CD4-positive, alpha-beta memory T cell (primary cell): ENCODE measurements at regions of chr11 and their contacts with region 1.

Region 1: DNA sequence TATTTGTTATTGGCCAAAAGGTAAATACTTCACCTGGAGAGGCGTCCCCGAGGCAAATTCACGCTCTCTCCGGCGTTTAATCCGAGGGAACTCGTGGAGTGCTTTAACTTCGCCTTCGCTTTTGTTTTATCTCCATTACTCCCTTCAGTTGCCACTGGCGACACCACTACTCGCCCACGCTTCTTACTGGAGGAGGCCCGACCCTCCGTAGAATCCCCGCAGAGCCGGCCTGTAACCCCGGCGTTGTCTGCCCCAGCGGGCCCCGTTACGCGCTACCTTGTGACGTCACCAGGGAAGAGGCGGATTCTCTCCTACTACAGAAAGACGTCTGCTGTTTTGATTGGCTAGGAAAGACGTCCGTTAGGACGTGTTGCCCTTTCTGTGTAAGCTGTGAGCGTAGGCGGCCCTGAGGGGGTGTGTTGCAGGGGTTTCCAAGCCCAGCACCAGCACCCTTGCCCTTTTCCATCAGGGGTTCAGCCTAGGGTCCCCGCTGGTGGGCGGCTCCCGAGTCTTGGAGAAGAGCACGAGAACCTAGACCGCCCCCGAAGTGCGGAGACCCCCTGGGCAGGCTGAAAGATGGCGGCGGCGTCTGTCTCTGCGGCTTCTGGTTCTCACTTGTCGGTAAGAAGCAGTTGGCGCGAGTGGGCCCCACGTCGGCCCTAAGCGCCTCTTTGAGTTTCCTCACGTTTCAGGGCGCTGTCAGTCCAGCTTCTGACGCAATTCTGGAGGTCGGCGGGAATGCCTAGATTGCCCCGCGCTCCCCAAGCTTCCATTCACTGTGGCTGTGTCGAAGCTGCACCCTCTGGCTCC is at the start of gene CEP57:
- DNase-seq: peak; percentile 95 to 99 (median 96)
- H3K4me3 ChIP-seq: peak within 1 kb of the TSS; percentile 68 to 98
- H3K4me3 Mint-ChIP-seq: peak within 1 kb of the TSS; percentile 97 to 100 (median 99)
- H3K27ac ChIP-seq: peak within 1 kb of the TSS; percentile 99
- H3K27ac Mint-ChIP-seq: peak within 1 kb of the TSS; percentile 100
- H3K4me1 ChIP-seq: peaks cover 47% of the 10 kb centered on the region
- H3K4me1 Mint-ChIP-seq: peaks cover 43 to 70% (median 56%) of the 10 kb centered on the region in 4 donors
- H3K27me3 ChIP-seq: no peaks in the 10 kb centered on the region
- H3K27me3 Mint-ChIP-seq: no peaks in the 10 kb centered on the region
- total RNA-seq, gene CEP57: 76.0 to 78.9 TPM

Region 2: DNA sequence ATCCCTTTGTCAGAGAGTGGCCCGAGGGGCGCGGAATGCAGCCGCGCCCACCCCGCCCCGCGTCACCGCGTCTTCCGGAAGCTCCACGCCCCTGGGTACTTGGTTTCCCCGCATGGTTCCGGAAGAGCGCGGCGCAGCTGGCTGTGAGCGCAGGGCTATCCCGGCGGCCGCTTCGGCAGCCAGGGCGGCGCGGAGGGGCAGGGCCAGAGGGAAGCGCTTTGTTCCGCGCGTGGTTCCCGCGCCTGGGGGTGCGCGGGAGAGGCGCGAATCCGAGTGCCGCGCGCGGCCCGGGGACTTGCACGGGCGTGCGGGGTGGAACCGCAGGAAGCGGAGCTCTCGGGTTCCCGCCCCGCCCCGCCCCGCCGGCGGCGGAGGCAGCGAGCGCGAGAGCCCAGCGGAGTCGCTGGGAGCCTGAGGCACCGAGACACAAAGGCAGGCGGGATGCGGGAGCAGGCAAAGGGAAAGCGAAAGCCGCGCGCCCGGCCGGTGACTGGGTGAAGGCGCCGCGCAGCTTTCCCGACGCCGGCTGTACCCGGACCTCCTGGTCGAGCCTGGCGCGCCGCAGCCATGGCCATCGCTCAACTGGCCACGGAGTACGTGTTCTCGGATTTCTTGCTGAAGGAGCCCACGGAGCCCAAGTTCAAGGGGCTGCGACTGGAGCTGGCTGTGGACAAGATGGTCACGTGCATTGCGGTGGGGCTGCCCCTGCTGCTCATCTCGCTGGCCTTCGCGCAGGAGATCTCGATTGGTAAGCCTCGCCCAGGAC is 1661.4 kb before region 1 on chr11 and contains the start of gene PANX1:
- CTCF ChIA-PET with region 1: no interaction called
- POLR2A ChIA-PET with region 1: interaction called, 3 read pairs
- intact Hi-C with region 1: loop called (anchors 5 kb)
- DNase-seq: peak; percentile 72 to 81 (median 78)
- H3K4me3 ChIP-seq: peak within 1 kb of the TSS; percentile 89 to 96
- H3K4me3 Mint-ChIP-seq: peak within 1 kb of the TSS in 4 of 8 donors; percentile 90 to 94 (median 92)
- H3K27ac ChIP-seq: peak within 1 kb of the TSS; percentile 84
- H3K27ac Mint-ChIP-seq: peak within 1 kb of the TSS; percentile 87 to 98 (median 94)
- H3K4me1 ChIP-seq: peaks cover 52% of the 10 kb centered on the region
- H3K4me1 Mint-ChIP-seq: peaks cover 21 to 31% (median 26%) of the 10 kb centered on the region in 4 donors
- H3K27me3 ChIP-seq: no peaks in the 10 kb centered on the region
- H3K27me3 Mint-ChIP-seq: no peaks in the 10 kb centered on the region
- total RNA-seq, gene PANX1: 7.6 to 8.3 TPM

Region 3: GRCh38 chr11:94973099-94973968 is 817.0 kb before region 1 on chr11 and contains the starts of genes CWC15 and KDM4D:
- CTCF ChIA-PET with region 1: no interaction called
- POLR2A ChIA-PET with region 1: interaction called, 15 read pairs
- intact Hi-C with region 1: loop called (anchors 1 kb)
- DNase-seq: peak; percentile 91 to 96 (median 93)
- H3K4me3 ChIP-seq: peak within 1 kb of the TSS; percentile 61 to 95
- H3K4me3 Mint-ChIP-seq: peak within 1 kb of the TSS; percentile 94 to 100 (median 98)
- H3K27ac ChIP-seq: peak within 1 kb of the TSS; percentile 92
- H3K27ac Mint-ChIP-seq: peak within 1 kb of the TSS; percentile 84 to 100 (median 98)
- H3K4me1 ChIP-seq: peaks cover 16% of the 10 kb centered on the region
- H3K4me1 Mint-ChIP-seq: peaks cover 14 to 35% (median 25%) of the 10 kb centered on the region in 4 donors
- H3K27me3 ChIP-seq: no peaks in the 10 kb centered on the region
- H3K27me3 Mint-ChIP-seq: no peaks in the 10 kb centered on the region
- total RNA-seq, gene CWC15: 62.7 to 69.4 TPM
- total RNA-seq, gene KDM4D: 0.32 to 0.39 TPM

Region 4: GRCh38 chr11:95778699-95779098 is 11.6 kb before region 1 on chr11:
- CTCF ChIA-PET with region 1: no interaction called
- POLR2A ChIA-PET with region 1: interaction called, 22 read pairs
- intact Hi-C with region 1: no loop called
- DNase-seq: no peak
- H3K4me3 ChIP-seq: no peak overlapping the region
- H3K4me3 Mint-ChIP-seq: no peak overlapping the region
- H3K27ac ChIP-seq: no peak overlapping the region
- H3K27ac Mint-ChIP-seq: peak overlapping the region in 1 of 7 donors; percentile 50
- H3K4me1 ChIP-seq: peaks cover 5% of the 10 kb centered on the region
- H3K4me1 Mint-ChIP-seq: peaks cover 8 to 22% (median 19%) of the 10 kb centered on the region in 4 donors
- H3K27me3 ChIP-seq: no peaks in the 10 kb centered on the region
- H3K27me3 Mint-ChIP-seq: no peaks in the 10 kb centered on the region

Region 5: GRCh38 chr11:96012086-96012824 is 221.9 kb after region 1 on chr11:
- CTCF ChIA-PET with region 1: no interaction called
- POLR2A ChIA-PET with region 1: interaction called, 10 read pairs
- intact Hi-C with region 1: loop called (anchors 2 kb)
- DNase-seq: peak; percentile 64 to 89 (median 75)
- H3K4me3 ChIP-seq: no peak overlapping the region
- H3K4me3 Mint-ChIP-seq: peak overlapping the region in 7 of 8 donors; percentile 22 to 83 (median 63)
- H3K27ac ChIP-seq: peak overlapping the region; percentile 44
- H3K27ac Mint-ChIP-seq: peak overlapping the region; percentile 64 to 97 (median 93)
- H3K4me1 ChIP-seq: peaks cover 59% of the 10 kb centered on the region
- H3K4me1 Mint-ChIP-seq: peaks cover 9 to 64% (median 52%) of the 10 kb centered on the region in 4 donors
- H3K27me3 ChIP-seq: no peaks in the 10 kb centered on the region
- H3K27me3 Mint-ChIP-seq: no peaks in the 10 kb centered on the region

Region 6: DNA sequence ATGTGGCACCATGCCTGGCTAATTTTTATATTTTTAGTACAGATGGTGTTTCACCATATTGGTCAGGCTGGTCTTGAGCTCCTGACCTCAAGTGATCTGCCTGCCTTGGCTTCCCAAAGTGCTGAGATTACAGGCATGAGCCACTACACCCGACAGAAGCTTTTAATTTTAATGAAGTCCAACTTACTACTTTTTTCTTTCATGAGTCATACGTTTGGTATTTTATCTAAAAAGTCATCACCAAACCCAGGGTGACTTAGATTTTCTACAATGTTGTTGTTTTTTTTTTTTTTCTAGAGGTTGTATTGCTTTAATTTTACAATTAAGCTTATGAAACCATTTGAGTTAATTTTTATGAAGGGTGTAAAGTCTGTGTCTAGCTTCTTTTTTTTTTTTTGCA is 634.4 kb after region 1 on chr11:
- CTCF ChIA-PET with region 1: interaction called, 3 read pairs
- POLR2A ChIA-PET with region 1: no interaction called
- intact Hi-C with region 1: loop called (anchors 1 kb)
- DNase-seq: no peak
- H3K4me3 ChIP-seq: no peak overlapping the region
- H3K4me3 Mint-ChIP-seq: no peak overlapping the region
- H3K27ac ChIP-seq: no peak overlapping the region
- H3K27ac Mint-ChIP-seq: no peak overlapping the region
- H3K4me1 ChIP-seq: no peaks in the 10 kb centered on the region
- H3K4me1 Mint-ChIP-seq: peaks cover 0 to 3% (median under 1%) of the 10 kb centered on the region in 4 donors
- H3K27me3 ChIP-seq: peaks cover 4% of the 10 kb centered on the region
- H3K27me3 Mint-ChIP-seq: peaks cover 29 to 31% of the 10 kb centered on the region in 2 donors